Activated CD8-positive, alpha-beta T cell treated with anti-CD3 and anti-CD28 coated beads for 36 hours (primary cell): ENCODE measurements at regions of chr9 and their contacts with region 1.

Region 1: DNA sequence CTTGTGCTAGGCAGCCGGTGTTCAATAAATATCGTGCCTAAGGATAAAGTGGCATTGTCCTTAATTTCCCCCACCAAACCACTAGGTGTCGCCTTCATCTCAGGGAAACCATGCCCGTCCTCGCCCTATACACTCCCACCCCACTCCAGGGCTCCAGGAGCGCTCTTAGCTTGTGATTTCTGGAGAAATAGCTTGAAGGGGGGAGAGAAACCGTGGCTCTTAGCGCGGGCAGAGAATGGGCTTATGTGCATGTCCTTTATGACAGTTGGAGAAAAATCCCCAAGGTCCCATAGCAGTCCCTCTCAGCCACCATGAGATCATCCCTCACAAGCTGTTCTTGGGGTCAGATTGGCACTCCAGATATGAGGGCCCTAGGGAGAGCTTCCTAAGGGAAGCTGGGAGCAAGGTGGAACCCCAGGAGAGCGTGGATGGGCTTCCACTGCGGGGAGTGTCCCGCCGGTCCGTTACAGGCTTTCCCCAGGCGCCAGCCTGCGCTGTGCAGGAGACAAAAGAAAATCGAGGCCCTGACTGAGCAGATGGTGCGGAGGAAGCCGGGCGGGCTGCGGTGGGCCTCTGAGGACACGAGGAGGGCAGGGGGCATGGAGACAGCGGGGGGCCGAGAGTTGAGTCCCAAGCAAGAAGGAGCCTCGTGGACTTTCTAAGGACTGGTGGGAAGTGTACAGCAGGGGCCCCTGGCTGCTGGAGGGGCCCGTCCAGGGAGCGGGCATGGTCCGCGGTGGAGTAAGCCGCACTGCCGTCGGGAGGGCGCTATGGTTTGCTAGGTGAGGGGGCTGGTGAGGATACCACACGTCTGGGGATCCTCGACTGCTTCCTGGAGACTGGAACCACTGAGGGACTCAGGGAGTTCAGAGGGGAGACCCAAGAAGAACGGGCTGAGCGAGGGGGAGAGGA is 750 bp upstream of the NPR2 start:
- DNase-seq: peak; percentile 65
- ATAC-seq: peak; percentile 94
- H3K4me3 Mint-ChIP-seq: no peak overlapping the region
- H3K27ac Mint-ChIP-seq: no peak overlapping the region
- H3K4me1 Mint-ChIP-seq: peaks cover 8% of the 10 kb centered on the region
- H3K27me3 Mint-ChIP-seq: no peaks in the 10 kb centered on the region
- CTCF ChIP-seq: peak; percentile 80

Region 2: DNA sequence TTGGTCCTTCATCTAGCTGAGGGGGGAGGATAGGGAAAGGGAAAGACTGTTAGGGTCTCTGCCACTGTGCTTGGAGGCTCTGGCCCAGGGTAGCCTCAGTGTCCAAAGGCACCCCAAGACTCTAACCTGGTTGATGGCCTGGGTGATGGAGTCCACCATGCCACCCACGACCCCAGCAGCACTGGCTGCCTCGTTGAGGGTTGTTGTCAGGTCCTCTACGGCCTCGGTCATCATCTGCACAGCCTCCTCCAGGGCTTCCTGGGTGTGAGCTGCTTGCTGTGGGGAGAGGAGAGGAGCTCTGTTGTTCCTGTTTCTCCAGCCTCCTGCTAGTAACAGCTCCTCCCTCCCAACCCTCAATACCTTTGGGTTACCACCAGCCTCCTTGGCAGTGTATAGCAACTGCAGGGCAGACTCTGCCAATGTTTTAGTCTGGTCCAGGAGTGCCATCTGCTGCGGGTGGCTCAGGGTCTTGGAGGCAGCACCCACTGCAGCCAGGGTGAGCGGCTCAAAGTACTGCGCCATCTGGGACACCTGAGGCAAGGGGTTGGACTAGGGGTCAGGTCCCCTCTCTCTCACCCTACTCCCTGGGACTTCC is 84.7 kb before region 1 on chr9:
- CTCF ChIA-PET with region 1: no interaction called
- POLR2A ChIA-PET with region 1: no interaction called
- intact Hi-C with region 1: no loop called
- DNase-seq: no peak
- ATAC-seq: no peak
- H3K4me3 Mint-ChIP-seq: no peak overlapping the region
- H3K27ac Mint-ChIP-seq: peak overlapping the region; percentile 20
- H3K4me1 Mint-ChIP-seq: no peaks in the 10 kb centered on the region
- H3K27me3 Mint-ChIP-seq: no peaks in the 10 kb centered on the region
- CTCF ChIP-seq: no peak

Region 3: DNA sequence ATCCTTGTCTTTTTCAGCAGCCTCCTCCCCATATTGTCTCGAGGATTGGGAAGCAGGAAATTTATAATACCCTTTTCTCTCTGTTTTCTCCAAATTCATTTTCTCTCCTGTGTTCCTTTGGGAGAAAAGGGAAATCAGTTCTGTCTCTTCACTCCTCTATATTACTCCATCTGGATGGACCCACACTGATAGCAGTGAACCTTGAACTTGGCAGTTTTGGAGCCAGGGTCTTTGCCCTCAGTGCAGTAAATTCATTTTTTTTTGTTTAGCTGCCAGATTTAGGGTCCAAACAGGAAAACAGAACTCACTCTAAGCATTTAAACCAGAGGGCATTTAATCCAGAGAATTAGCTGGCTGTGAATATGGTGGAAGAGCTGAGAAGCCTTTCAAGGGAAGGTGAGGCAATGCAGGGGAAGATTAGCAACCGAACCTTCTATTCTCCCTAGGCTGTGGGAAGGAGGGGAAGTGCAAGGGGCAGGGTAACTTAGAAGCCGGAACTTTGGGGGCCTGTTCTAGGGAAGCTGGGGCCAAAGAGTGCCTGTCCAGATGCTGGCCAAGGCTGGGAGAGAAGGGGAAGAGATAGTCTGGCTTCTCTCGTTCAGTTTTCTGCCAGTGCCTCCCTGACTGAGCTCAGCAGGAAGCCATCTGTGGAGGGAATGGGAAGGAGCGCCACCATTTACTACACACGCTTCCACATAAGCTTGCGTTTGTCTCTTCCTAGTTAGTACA is 15.6 kb before region 1 on chr9:
- CTCF ChIA-PET with region 1: interaction called, 30 read pairs
- POLR2A ChIA-PET with region 1: no interaction called
- intact Hi-C with region 1: no loop called
- DNase-seq: no peak
- ATAC-seq: no peak
- H3K4me3 Mint-ChIP-seq: no peak overlapping the region
- H3K27ac Mint-ChIP-seq: no peak overlapping the region
- H3K4me1 Mint-ChIP-seq: peaks cover 6% of the 10 kb centered on the region
- H3K27me3 Mint-ChIP-seq: no peaks in the 10 kb centered on the region
- CTCF ChIP-seq: no peak

Region 4: GRCh38 chr9:35805551-35805950 is 14.9 kb after region 1 on chr9:
- CTCF ChIA-PET with region 1: interaction called, 30 read pairs
- POLR2A ChIA-PET with region 1: no interaction called
- intact Hi-C with region 1: no loop called
- DNase-seq: no peak
- ATAC-seq: no peak
- H3K4me3 Mint-ChIP-seq: no peak overlapping the region
- H3K27ac Mint-ChIP-seq: no peak overlapping the region
- H3K4me1 Mint-ChIP-seq: peaks cover 3% of the 10 kb centered on the region
- H3K27me3 Mint-ChIP-seq: no peaks in the 10 kb centered on the region
- CTCF ChIP-seq: no peak

Region 5: DNA sequence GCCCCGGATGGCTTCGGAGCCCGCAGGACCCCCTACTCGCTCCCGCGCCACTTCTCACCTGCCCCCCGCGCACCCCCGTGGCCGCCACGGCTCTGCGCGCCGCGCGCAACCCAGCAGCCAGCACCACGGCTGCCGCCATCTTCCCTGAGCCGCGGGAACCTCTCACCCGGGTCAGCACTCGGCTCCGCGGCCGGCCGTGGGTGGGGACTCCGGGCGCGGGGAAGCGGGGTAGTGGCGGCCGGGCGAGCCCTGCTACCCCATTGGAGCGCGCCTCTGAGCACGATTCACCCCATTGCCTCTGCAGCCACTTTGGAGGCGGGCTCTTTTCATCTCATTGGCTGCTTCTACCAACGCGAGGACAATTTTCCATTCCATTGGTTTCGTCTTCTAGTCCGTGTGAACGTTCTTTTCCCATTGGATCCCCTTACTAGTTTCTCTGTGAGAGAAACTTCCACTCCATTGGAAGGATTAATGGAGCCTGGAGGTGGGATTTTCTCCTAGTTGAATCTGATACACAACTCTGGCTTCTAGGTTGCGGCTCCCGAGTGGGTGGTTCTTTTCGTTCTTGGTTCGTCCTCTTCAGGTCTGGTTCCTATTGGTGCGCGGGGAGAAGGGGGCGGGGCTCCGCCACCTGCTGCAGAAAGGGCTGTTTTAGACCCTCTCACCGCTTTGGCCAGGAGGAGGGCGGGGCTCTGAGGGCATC is 24.4 kb after region 1 on chr9 and contains the start of gene HINT2:
- CTCF ChIA-PET with region 1: interaction called, 22 read pairs
- POLR2A ChIA-PET with region 1: no interaction called
- intact Hi-C with region 1: no loop called
- DNase-seq: peak; percentile 100
- ATAC-seq: peak; percentile 85
- H3K4me3 Mint-ChIP-seq: peak within 1 kb of the TSS; percentile 92
- H3K27ac Mint-ChIP-seq: peak within 1 kb of the TSS; percentile 97
- H3K4me1 Mint-ChIP-seq: peaks cover 34% of the 10 kb centered on the region
- H3K27me3 Mint-ChIP-seq: no peaks in the 10 kb centered on the region
- CTCF ChIP-seq: no peak
- total RNA-seq, gene HINT2: 53.4 to 62.7 TPM

Region 6: GRCh38 chr9:35829084-35829763 is 38.6 kb after region 1 on chr9 and contains the start of gene TMEM8B:
- CTCF ChIA-PET with region 1: interaction called, 34 read pairs
- POLR2A ChIA-PET with region 1: no interaction called
- intact Hi-C with region 1: loop called (anchors 2 kb)
- DNase-seq: peak; percentile 99
- ATAC-seq: peak; percentile 93
- H3K4me3 Mint-ChIP-seq: peak within 1 kb of the TSS; percentile 86
- H3K27ac Mint-ChIP-seq: peak within 1 kb of the TSS; percentile 89
- H3K4me1 Mint-ChIP-seq: peaks cover 24% of the 10 kb centered on the region
- H3K27me3 Mint-ChIP-seq: no peaks in the 10 kb centered on the region
- CTCF ChIP-seq: no peak
- total RNA-seq, gene TMEM8B: 3.4 to 4.3 TPM

Region 7: GRCh38 chr9:35835216-35835632 is 44.6 kb after region 1 on chr9:
- CTCF ChIA-PET with region 1: interaction called, 34 read pairs
- POLR2A ChIA-PET with region 1: no interaction called
- intact Hi-C with region 1: no loop called
- DNase-seq: no peak
- ATAC-seq: peak; percentile 56
- H3K4me3 Mint-ChIP-seq: no peak overlapping the region
- H3K27ac Mint-ChIP-seq: no peak overlapping the region
- H3K4me1 Mint-ChIP-seq: peaks cover 8% of the 10 kb centered on the region
- H3K27me3 Mint-ChIP-seq: no peaks in the 10 kb centered on the region
- CTCF ChIP-seq: no peak